ENCODE measurements at regions of chr16 and their contacts with region 1.

Region 1: GRCh38 chr16:19680881-19681340 is 37.1 kb downstream of the KNOP1 start:
- DNase-seq: no peak
- ATAC-seq: peak; percentile 55
- H3K4me3 ChIP-seq: no peak overlapping the region
- H3K27ac ChIP-seq: no peak overlapping the region
- H3K4me1 ChIP-seq: no peaks in the 10 kb centered on the region
- H3K27me3 ChIP-seq: no peaks in the 10 kb centered on the region
- CTCF ChIP-seq: no peak; the same call in 1 of the 2 replicates

Region 2: DNA sequence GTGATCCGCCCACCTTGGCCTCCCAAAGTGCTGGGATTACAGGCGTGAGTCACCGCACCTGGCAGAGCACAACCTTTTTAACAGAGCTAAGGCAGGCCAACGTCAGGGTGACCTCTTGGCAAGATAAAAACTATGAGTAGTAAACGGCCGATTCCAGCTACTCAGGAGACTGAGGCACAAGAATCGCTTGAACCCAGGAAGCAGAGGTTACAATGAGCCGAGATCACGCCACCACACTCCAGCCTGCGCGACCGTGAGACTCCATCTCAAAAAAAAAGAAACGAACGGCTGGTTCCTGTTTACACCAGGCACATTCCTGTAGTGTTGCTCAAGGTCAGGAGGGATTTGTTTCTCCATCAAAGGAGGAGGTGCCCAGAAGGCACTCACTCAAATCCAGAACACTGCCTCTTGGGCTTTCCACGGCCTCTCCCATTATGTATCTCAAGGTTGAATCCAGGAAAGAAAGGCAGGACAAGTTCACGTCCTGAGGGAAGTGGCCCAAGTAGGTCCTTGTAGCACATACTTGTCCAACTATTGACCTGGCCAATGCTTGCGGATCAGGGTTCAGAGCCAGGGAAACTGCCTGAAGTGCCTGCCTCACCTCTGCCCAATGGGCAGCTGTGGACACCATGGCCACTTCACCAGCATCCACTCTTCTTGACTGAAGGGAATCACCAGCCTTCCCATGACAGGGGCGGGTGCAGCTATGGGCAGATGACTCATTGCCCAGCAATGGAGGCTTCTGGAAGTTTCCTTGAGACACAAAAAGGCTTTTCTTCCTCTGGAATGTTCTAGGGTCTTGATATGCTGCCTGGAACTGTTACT is 23.6 kb after region 1 on chr16:
- CTCF ChIA-PET with region 1: no interaction called
- POLR2A ChIA-PET with region 1: interaction called, 10 read pairs
- in situ Hi-C with region 1: no loop called
- intact Hi-C with region 1: no loop called
- DNase-seq: no peak
- ATAC-seq: no peak
- H3K4me3 ChIP-seq: no peak overlapping the region
- H3K27ac ChIP-seq: no peak overlapping the region
- H3K4me1 ChIP-seq: peaks cover 8% of the 10 kb centered on the region
- H3K27me3 ChIP-seq: no peaks in the 10 kb centered on the region
- CTCF ChIP-seq: no peak

Region 3: DNA sequence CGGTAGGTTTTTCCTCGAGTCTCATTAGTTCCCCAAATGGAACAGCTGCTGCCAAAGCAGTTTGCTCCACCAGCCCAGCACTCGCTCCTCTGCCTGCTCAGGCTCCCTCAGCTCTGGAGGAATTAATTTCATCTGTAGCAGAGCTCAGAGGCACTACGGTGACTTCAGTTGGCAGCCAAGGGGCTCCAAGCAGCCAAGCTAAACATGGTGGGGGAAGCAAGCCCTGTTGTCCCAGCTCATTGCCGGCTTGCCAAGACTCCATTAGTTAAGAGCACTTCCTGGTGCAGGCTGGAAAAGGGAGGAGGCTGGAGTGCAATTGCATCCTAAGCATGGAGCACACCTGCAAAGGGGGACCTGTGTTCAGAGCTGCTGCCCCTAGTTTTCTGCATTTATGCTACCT is 282.4 kb after region 1 on chr16:
- CTCF ChIA-PET with region 1: no interaction called
- POLR2A ChIA-PET with region 1: no interaction called
- in situ Hi-C with region 1: no loop called
- intact Hi-C with region 1: no loop called
- DNase-seq: no peak
- ATAC-seq: no peak
- H3K4me3 ChIP-seq: no peak overlapping the region
- H3K27ac ChIP-seq: no peak overlapping the region
- H3K4me1 ChIP-seq: no peaks in the 10 kb centered on the region
- H3K27me3 ChIP-seq: peaks cover 19% of the 10 kb centered on the region
- CTCF ChIP-seq: no peak

Region 4: GRCh38 chr16:20334396-20334795 is 653.5 kb after region 1 on chr16:
- CTCF ChIA-PET with region 1: interaction called, 10 read pairs
- POLR2A ChIA-PET with region 1: no interaction called
- in situ Hi-C with region 1: no loop called
- intact Hi-C with region 1: no loop called
- DNase-seq: no peak
- ATAC-seq: no peak
- H3K4me3 ChIP-seq: no peak overlapping the region
- H3K27ac ChIP-seq: no peak overlapping the region
- H3K4me1 ChIP-seq: no peaks in the 10 kb centered on the region
- H3K27me3 ChIP-seq: peaks cover 15% of the 10 kb centered on the region
- CTCF ChIP-seq: no peak